CD8-positive, alpha-beta memory T cell (primary cell): ENCODE measurements at regions of chr7 and their contacts with region 1.

Region 1: GRCh38 chr7:63925623-63926460 is 72.8 kb upstream of the ZNF722 start:
- DNase-seq: peak; percentile 60 to 97 (median 93)
- H3K4me3 ChIP-seq: peak overlapping the region; percentile 67
- H3K4me3 Mint-ChIP-seq: peak overlapping the region; percentile 94 to 98 (median 97)
- H3K27ac ChIP-seq: peak overlapping the region; percentile 40
- H3K27ac Mint-ChIP-seq: peak overlapping the region; percentile 92 to 99 (median 95)
- H3K4me1 ChIP-seq: no peaks in the 10 kb centered on the region
- H3K4me1 Mint-ChIP-seq: peaks cover 12 to 21% (median 20%) of the 10 kb centered on the region in 3 donors
- H3K27me3 ChIP-seq: no peaks in the 10 kb centered on the region
- H3K27me3 Mint-ChIP-seq: peaks cover 0 to 1% of the 10 kb centered on the region in 2 donors

Region 2: GRCh38 chr7:63900394-63901203 is 25.2 kb before region 1 on chr7:
- CTCF ChIA-PET with region 1: interaction called, 7 read pairs
- POLR2A ChIA-PET with region 1: interaction called, 18 read pairs
- DNase-seq: peak; percentile 49 to 94 (median 88)
- H3K4me3 ChIP-seq: peak overlapping the region; percentile 88
- H3K4me3 Mint-ChIP-seq: peak overlapping the region; percentile 88 to 99 (median 97)
- H3K27ac ChIP-seq: peak overlapping the region; percentile 76
- H3K27ac Mint-ChIP-seq: peak overlapping the region; percentile 71 to 100 (median 98)
- H3K4me1 ChIP-seq: no peaks in the 10 kb centered on the region
- H3K4me1 Mint-ChIP-seq: peaks cover 0 to 10% (median 9%) of the 10 kb centered on the region in 3 donors
- H3K27me3 ChIP-seq: no peaks in the 10 kb centered on the region
- H3K27me3 Mint-ChIP-seq: peaks cover 0 to 1% of the 10 kb centered on the region in 2 donors